ENCODE measurements at regions of chr15 and their contacts with region 1.

Region 1: DNA sequence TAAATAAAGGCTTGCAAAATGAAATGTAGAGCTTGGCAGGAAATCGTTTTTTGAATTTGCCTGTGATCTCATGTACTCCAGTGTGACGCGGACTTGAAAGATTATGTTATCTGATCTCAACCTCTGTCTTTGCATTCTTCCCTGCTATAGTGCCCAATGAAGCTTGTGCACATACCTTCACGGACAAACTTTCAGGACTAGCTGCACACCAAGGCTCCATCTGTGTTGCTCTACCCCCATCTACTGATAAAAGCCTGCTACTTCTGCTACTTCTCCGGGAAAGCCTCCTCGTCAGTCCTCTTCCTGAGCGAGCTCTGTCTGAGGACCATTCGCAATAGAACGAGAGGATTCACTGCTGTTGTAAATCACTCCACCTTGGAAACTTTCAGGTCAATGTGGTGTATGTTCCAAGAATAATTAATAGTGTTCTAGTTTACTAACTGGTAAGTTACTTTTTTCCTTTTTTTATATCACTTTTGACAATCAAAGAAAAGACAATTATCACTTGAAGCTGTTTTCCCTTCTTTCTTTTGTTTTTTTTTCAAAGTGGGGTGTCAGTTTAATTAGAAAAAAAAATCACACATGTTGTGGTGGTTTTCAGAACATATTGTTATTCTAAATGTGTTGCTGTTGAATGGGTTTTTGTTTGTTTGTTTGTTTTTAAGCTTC is 217.6 kb downstream of the ARRDC4 start:
- H3K4me3 ChIP-seq: no peak overlapping the region
- H3K27ac ChIP-seq: no peak overlapping the region
- H3K4me1 ChIP-seq: no peaks in the 10 kb centered on the region
- CTCF ChIP-seq: peak; percentile 89

Region 2: DNA sequence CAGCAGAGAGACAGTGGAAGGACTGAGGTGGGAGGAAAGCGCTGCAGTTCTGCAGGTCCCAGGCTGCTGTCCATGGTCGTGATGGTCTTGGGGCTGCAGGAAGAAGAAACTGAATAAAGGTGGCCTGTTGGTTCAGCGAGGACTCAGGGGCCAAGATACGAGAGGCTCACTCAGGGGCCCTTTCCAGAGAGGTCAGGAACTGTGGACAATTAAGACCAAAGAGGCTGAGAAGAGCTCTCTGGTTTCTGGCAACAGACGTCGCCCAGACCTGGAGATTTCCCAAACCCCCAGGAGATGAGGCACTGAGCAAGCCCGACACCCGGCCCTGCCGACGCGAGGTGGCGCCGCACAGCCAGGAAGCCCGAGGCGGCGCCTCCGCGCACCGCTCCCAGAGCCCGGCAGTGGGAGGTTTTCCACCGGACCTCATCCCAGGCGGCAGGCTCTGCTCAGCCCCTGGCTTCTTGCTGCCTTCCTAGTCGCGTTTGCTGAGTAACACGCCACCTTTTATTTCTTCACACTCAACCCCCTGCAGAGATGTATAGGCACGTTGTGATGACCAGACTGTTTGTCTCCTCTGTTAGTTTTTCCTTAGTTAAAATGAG is 274.0 kb before region 1 on chr15:
- CTCF ChIA-PET with region 1: interaction called, 53 read pairs
- POLR2A ChIA-PET with region 1: interaction called, 4 read pairs
- H3K4me3 ChIP-seq: no peak overlapping the region
- H3K27ac ChIP-seq: no peak overlapping the region
- H3K4me1 ChIP-seq: no peaks in the 10 kb centered on the region
- CTCF ChIP-seq: peak; percentile 88

Region 3: DNA sequence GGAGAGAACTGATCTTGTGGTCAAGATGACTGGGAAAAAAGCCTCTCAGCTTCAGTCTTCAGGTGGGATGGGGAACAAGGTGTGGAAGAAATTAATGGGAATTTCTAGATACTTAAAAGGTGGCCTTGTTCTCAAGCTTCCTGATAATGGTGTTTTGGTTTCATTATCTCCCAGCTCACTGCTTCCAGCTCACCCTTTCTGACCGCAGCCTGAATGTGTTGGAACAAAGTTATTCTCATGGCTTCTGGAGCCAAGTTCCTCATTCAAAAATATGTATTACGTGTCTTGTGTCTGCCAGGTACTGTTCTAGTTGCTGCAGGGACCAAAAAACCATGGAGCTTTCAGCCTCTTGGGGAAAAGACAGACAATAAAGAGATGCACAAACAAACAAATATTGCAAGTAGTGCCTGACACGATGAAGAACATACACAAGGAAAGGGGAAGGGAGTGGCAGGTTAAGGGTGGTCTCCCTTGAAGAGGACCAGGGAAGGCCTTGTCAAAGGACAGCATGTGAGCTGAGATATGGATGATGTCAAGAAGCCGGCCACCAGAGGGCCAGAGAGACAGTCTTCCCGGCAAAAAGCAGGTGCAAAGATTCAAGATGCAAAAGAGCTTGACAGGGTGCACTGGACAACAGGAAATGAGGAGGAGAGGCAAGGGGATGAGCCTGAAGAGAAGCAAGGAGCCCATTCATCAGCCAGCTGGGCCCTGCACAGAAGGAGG is 182.0 kb before region 1 on chr15:
- CTCF ChIA-PET with region 1: interaction called, 10 read pairs
- POLR2A ChIA-PET with region 1: no interaction called
- H3K4me3 ChIP-seq: no peak overlapping the region
- H3K27ac ChIP-seq: no peak overlapping the region
- H3K4me1 ChIP-seq: no peaks in the 10 kb centered on the region
- CTCF ChIP-seq: 0 out of 2 replicates have a peak, but pooled peaks have one; percentile 10

Region 4: DNA sequence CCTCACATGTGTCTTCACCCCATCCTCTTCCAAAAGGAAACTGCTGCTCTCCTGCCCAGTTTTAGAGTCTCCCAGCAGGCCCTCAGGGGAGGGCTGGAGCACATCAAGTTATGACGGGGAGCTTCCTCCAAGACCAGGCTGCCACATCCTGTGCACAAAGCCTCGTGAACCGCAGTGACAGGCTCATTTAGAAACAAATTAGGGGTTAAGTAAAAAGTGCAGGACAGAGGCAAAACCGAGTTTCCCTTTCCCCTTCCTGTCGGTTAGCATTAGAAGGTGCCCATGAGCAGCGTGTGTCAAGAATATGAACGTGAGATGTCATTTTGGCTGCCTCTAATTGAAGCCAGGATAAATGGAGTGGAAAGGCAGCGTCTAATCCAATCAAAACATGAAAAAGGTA is 17.8 kb before region 1 on chr15:
- CTCF ChIA-PET with region 1: interaction called, 10 read pairs
- POLR2A ChIA-PET with region 1: no interaction called
- H3K4me3 ChIP-seq: no peak overlapping the region
- H3K27ac ChIP-seq: no peak overlapping the region
- H3K4me1 ChIP-seq: no peaks in the 10 kb centered on the region; the same call in 1 of the 2 replicates
- CTCF ChIP-seq: no peak

Region 5: DNA sequence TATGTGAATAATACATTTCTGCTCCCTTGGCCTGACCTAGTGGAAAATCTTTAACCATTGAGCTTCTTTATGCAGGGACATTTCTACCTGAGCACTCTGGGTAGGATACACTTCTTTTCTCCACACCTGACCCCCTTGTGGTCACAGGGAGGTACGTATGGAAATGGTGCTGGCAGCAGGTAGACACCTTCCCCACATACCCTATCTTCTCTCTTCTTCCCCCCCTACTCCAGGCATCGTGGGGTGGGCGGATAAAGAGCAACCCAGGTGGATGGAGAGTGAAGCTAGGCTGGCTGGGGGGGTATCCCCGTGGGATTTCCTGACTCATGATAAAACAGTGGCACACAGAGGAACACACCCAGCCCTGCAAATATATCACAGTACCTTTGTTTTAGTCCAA is 94.6 kb after region 1 on chr15:
- CTCF ChIA-PET with region 1: no interaction called
- POLR2A ChIA-PET with region 1: no interaction called
- H3K4me3 ChIP-seq: no peak overlapping the region
- H3K27ac ChIP-seq: no peak overlapping the region
- H3K4me1 ChIP-seq: no peaks in the 10 kb centered on the region
- CTCF ChIP-seq: no peak

Region 6: GRCh38 chr15:98428253-98428989 is 250.4 kb after region 1 on chr15:
- CTCF ChIA-PET with region 1: interaction called, 12 read pairs
- POLR2A ChIA-PET with region 1: no interaction called
- H3K4me3 ChIP-seq: peak overlapping the region; percentile 43
- H3K27ac ChIP-seq: no peak overlapping the region
- H3K4me1 ChIP-seq: no peaks in the 10 kb centered on the region
- CTCF ChIP-seq: peak; percentile 78